HEK293 (cell line): ENCODE measurements at regions of chr5 and their contacts with region 1.

Region 1: DNA sequence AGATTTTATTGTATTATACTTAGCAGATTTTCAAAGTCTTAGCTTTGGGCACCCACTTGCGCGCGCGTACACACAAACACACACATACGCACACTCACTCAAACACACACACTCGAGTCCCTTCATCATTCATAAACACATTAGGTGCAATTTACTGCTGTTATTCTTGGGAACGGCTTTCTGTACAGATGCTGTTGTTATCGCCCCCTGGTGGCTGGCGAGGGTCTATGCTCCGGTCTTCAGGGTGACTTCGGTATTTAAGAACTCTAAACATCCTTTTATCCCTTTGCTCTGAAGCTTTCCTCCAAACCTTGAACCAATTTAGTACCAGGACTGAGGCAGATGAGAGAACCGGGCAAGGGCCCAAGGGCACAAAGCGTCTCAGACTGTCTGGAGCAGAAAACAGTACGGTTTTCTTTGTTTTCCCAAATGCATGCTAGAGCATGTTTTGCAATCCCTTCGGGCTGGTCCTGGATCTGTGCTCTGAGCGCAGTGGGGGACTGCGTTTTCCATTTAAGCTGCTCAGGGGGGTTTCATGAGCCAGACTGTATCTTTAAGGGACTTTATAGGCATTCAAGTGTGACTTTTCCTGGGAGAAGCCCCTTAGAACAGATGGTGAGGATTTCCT is 1.7 kb upstream of the SLIT3 start:
- H3K4me3 ChIP-seq: no peak overlapping the region
- H3K27ac ChIP-seq: no peak overlapping the region
- H3K4me1 ChIP-seq: peaks cover 5% of the 10 kb centered on the region; the same call in 1 of the 2 replicates
- CTCF ChIP-seq: peak; percentile 73

Region 2: DNA sequence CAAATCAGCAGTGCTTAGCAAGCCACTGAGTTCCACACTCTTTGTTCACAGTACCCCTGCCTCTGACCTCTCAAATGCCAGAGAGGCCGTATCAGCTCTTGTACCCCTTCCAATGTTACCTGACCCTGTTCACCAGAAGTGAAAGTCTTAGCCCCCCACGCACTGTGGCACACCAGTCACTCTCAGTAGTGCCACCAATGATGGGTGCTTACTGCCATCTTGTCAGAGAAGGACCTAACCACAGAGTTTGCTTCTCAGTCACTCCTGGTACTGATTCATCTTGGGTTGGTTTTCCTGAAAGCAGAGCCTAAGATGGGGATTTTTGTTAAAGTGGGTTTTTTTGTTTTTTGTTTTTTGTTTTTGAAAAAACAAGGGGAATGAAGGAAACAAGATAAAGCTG is 694.7 kb before region 1 on chr5:
- CTCF ChIA-PET with region 1: no interaction called
- POLR2A ChIA-PET with region 1: no interaction called
- H3K4me3 ChIP-seq: no peak overlapping the region
- H3K27ac ChIP-seq: no peak overlapping the region
- H3K4me1 ChIP-seq: no peaks in the 10 kb centered on the region
- CTCF ChIP-seq: no peak

Region 3: DNA sequence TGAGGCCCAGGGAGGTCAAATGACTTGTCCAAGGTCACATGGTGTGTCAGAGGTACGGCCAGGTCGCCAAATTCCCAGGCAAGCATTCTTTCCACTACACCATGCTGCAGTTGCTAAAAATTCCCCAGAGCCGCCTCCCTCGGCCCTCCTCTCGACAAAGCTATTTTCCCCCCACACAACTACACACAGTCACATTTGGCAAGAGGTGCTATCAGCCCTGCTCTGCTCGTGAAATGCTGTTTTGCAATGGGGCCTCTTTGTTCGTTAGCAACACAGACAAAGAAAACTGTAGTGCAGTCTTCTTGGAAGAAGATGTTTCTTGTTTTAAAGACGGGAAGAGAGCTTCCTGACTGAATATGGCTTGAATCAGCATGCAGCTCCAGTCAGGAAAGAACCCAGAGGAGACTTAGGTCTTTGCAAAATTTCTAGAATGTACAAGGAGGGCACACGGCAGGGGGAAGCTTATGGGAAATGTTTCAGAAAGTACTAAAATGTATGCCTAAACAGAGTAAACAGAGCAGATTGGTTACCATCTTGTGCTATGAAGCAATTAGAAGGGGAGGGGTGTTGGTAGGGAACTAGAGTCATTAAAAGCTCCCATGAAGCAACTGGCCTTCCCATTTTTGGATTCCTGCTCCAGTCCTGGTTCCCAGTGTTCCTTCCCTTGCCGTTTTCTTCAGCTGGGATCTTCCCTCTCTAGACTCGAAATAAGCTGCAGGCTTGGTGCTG is 15.9 kb before region 1 on chr5:
- CTCF ChIA-PET with region 1: interaction called, 21 read pairs
- POLR2A ChIA-PET with region 1: no interaction called
- H3K4me3 ChIP-seq: no peak overlapping the region
- H3K27ac ChIP-seq: no peak overlapping the region
- H3K4me1 ChIP-seq: no peaks in the 10 kb centered on the region
- CTCF ChIP-seq: no peak

Region 4: GRCh38 chr5:169548315-169548714 is 245.7 kb after region 1 on chr5:
- CTCF ChIA-PET with region 1: interaction called, 14 read pairs
- POLR2A ChIA-PET with region 1: no interaction called
- H3K4me3 ChIP-seq: no peak overlapping the region
- H3K27ac ChIP-seq: no peak overlapping the region
- H3K4me1 ChIP-seq: no peaks in the 10 kb centered on the region
- CTCF ChIP-seq: peak; percentile 55

Region 5: DNA sequence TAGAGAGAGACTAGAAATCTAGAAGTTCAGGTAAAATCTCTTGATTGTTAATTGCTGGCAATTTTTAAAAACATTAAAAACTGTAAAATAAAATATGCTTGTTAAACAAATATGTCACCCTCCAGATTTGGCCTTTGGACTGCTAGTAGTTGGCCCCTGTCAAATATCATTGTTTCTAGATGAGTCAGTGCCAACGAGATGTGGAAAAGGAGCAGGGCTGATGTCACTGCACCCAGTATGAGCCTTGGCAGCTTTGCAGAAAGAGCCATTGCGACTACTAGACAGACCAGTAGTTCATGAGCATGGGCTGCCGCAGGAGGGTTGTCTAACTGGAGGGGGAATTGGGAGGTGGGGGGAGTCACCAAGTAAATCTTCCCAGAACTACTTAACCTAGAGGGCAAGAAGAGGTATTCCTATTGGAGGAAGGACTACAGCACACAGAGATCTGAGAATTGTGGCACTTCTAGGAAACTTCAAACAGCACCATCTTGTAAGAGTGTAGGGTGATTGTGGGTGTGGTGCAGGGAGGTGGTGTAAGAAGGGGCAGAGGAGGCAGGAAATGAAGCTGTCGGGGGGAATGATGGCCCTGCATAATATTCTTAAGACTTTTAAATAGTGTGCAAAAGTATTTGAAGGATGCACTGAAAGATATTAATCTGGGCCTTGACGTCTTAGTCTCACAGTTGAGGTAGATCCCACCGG is 327.4 kb after region 1 on chr5:
- CTCF ChIA-PET with region 1: no interaction called
- POLR2A ChIA-PET with region 1: no interaction called
- H3K4me3 ChIP-seq: no peak overlapping the region
- H3K27ac ChIP-seq: no peak overlapping the region
- H3K4me1 ChIP-seq: no peaks in the 10 kb centered on the region
- CTCF ChIP-seq: no peak